Psoas muscle (tissue), 8 donors: ENCODE measurements at regions of chr6 and their contacts with region 1.

Region 1: GRCh38 chr6:7725849-7726415 is at the start of gene BMP6:
- DNase-seq: peak; percentile 84 to 92
- ATAC-seq: peak; percentile 93 to 97 (median 96)
- H3K4me3 ChIP-seq: peak within 1 kb of the TSS; percentile 79
- H3K27ac ChIP-seq: no peak within 1 kb of the TSS
- H3K4me1 ChIP-seq: peaks cover 15% of the 10 kb centered on the region
- H3K27me3 ChIP-seq: peaks cover 0 to 59% (median 15%) of the 10 kb centered on the region in 3 donors
- CTCF ChIP-seq: no peak
- total RNA-seq, gene BMP6: 1.5 to 4.9 (median 2.8) TPM

Region 2: GRCh38 chr6:7691675-7692452 is 34.1 kb before region 1 on chr6:
- intact Hi-C with region 1: loop called in 1 of 2 experiments (anchors 1 kb)
- DNase-seq: peak in 1 of 2 donors; percentile 50
- ATAC-seq: no peak
- H3K4me3 ChIP-seq: no peak overlapping the region
- H3K27ac ChIP-seq: no peak overlapping the region
- H3K4me1 ChIP-seq: no peaks in the 10 kb centered on the region
- H3K27me3 ChIP-seq: peaks cover 0 to 13% (median 0%) of the 10 kb centered on the region in 3 donors
- CTCF ChIP-seq: no peak

Region 3: GRCh38 chr6:7910654-7911344 is 184.9 kb after region 1 on chr6 and contains the start of gene TXNDC5:
- intact Hi-C with region 1: loop called in 1 of 2 experiments (anchors 5 kb)
- DNase-seq: peak; percentile 84 to 88
- ATAC-seq: peak; percentile 87 to 92 (median 90)
- H3K4me3 ChIP-seq: peak within 1 kb of the TSS; percentile 78
- H3K27ac ChIP-seq: peak within 1 kb of the TSS; percentile 74
- H3K4me1 ChIP-seq: peaks cover 11% of the 10 kb centered on the region
- H3K27me3 ChIP-seq: no peaks in the 10 kb centered on the region
- CTCF ChIP-seq: no peak
- total RNA-seq, gene TXNDC5: 15.5 to 33.2 (median 23.4) TPM

Region 4: DNA sequence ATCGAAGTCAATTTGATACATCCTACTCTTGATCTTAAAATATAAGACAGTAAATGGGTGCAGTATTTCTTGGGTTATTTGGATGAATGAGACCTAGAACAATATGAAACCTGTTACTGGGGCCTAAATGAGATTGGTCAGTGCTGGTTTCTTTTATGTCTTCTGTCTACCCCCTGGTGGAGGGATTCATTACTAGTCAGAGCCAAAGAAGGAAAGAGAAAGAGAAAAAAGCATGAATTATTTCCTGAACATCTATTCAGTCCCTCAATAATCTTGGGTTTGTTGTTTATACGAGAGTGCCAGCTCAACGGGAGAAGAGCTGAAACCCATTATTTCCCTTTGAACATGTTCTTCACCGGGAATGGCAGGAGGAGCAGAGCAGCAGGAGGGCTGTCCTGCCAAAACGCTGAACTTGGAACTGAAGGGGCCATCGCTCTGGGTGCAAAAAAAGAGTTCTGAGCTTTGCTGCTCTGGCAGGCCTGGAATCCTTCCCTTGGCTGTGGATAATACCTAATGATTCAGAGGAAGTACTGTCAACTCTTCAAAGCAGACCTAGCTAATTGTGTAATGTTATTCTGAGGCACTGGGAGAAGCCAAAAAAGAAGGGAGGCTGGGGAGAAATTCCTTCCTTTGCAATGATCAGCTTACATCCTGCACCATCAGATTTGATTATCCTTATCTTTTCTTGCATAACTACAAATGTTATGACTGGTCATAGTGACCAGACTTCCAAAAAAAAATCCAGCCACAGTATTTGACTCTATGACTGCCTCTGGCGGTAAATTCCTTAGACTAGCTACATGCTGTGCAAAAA is 266.3 kb after region 1 on chr6:
- intact Hi-C with region 1: loop called in 1 of 2 experiments (anchors 5 kb)
- DNase-seq: peak in 1 of 2 donors; percentile 34
- ATAC-seq: peak in 3 of 4 donors; percentile 20 to 64 (median 49)
- H3K4me3 ChIP-seq: no peak overlapping the region
- H3K27ac ChIP-seq: no peak overlapping the region
- H3K4me1 ChIP-seq: no peaks in the 10 kb centered on the region
- H3K27me3 ChIP-seq: no peaks in the 10 kb centered on the region
- CTCF ChIP-seq: peak; percentile 36

Region 5: GRCh38 chr6:8006208-8006607 is 280.3 kb after region 1 on chr6:
- intact Hi-C with region 1: loop called (anchors 5 kb)
- DNase-seq: no peak
- ATAC-seq: peak in 2 of 4 donors; percentile 49 to 54
- H3K4me3 ChIP-seq: no peak overlapping the region
- H3K27ac ChIP-seq: no peak overlapping the region
- H3K4me1 ChIP-seq: no peaks in the 10 kb centered on the region
- H3K27me3 ChIP-seq: no peaks in the 10 kb centered on the region
- CTCF ChIP-seq: peak; percentile 53

Region 6: GRCh38 chr6:8063761-8064637 is 338.1 kb after region 1 on chr6 and contains the start of gene BLOC1S5:
- intact Hi-C with region 1: loop called (anchors 2 to 5 kb)
- DNase-seq: peak; percentile 96 to 97
- ATAC-seq: peak; percentile 99
- H3K4me3 ChIP-seq: peak within 1 kb of the TSS; percentile 96
- H3K27ac ChIP-seq: peak within 1 kb of the TSS; percentile 89
- H3K4me1 ChIP-seq: peaks cover 7% of the 10 kb centered on the region
- H3K27me3 ChIP-seq: no peaks in the 10 kb centered on the region
- CTCF ChIP-seq: no peak
- total RNA-seq, gene BLOC1S5: 6.2 to 13.0 (median 8.8) TPM

Region 7: DNA sequence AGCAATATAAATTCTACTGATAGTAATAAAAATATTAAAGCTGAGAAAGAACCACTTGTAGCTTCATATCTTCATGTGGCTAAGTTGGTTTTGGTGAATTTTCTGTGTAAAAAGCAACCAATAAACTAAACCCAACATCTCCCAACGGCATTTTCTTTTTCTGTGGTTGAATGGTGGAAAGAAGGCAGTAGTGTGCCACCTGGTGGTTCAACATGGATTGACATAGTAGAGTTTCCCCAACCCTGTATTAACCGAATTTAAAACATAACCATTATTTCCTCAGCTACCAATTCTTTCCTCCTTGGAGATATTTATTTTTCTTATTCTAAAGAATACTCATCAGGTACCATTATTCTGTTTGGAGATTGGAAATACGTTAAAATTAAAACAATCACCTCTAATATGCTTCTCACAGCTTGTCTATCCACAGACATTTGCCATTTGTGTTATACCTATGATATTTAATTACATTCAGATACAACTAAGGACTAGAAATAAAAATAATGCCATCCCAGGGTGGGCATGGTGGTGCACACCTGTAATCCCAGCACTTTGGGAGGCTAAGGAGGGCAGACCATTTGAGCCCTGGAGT is 493.5 kb after region 1 on chr6:
- intact Hi-C with region 1: loop called (anchors 5 to 10 kb)
- DNase-seq: no peak
- ATAC-seq: peak in 1 of 4 donors; percentile 43
- H3K4me3 ChIP-seq: no peak overlapping the region
- H3K27ac ChIP-seq: no peak overlapping the region
- H3K4me1 ChIP-seq: no peaks in the 10 kb centered on the region
- H3K27me3 ChIP-seq: no peaks in the 10 kb centered on the region
- CTCF ChIP-seq: peak; percentile 71